ENCODE measurements at regions of chr13 and their contacts with region 1.

Region 1: GRCh38 chr13:62643007-62643483 is 1227.4 kb upstream of the PCDH20 start:
- DNase-seq: no peak
- ATAC-seq: no peak
- H3K4me3 ChIP-seq: no peak overlapping the region
- H3K4me3 Mint-ChIP-seq: no peak overlapping the region
- H3K27ac ChIP-seq: no peak overlapping the region
- H3K27ac Mint-ChIP-seq: no peak overlapping the region
- H3K4me1 ChIP-seq: no peaks in the 10 kb centered on the region
- H3K4me1 Mint-ChIP-seq: no peaks in the 10 kb centered on the region
- H3K27me3 ChIP-seq: no peaks in the 10 kb centered on the region
- H3K27me3 Mint-ChIP-seq: no peaks in the 10 kb centered on the region

Region 2: DNA sequence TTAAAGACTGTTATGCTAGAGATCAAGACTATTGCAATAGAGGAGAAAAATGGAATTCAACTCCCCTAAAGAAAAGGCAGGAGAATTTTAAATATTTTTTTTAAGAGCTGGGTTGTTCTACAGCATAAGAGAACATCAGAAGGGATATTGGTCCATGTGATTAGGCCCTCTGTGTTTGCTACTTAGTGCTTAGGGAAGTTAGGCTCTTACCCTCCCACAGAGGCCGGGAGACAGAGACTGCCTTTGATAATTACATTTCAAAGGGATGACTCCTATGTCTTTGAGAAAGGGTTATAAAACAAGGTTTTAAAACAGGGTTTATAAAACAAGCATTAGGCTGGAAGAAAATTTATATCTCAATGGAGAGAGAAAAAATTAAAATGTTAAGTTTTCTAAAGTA is 20.7 kb after region 1 on chr13:
- CTCF ChIA-PET with region 1: no interaction called
- POLR2A ChIA-PET with region 1: no interaction called
- DNase-seq: no peak
- ATAC-seq: no peak
- H3K4me3 ChIP-seq: no peak overlapping the region
- H3K4me3 Mint-ChIP-seq: no peak overlapping the region
- H3K27ac ChIP-seq: no peak overlapping the region
- H3K27ac Mint-ChIP-seq: no peak overlapping the region
- H3K4me1 ChIP-seq: no peaks in the 10 kb centered on the region
- H3K4me1 Mint-ChIP-seq: no peaks in the 10 kb centered on the region
- H3K27me3 ChIP-seq: no peaks in the 10 kb centered on the region
- H3K27me3 Mint-ChIP-seq: no peaks in the 10 kb centered on the region

Region 3: GRCh38 chr13:62696490-62696889 is 53.4 kb after region 1 on chr13:
- CTCF ChIA-PET with region 1: interaction called in 1 of 2 experiments, 11 read pairs
- POLR2A ChIA-PET with region 1: no interaction called
- DNase-seq: no peak
- ATAC-seq: no peak
- H3K4me3 ChIP-seq: no peak overlapping the region
- H3K4me3 Mint-ChIP-seq: no peak overlapping the region
- H3K27ac ChIP-seq: no peak overlapping the region
- H3K27ac Mint-ChIP-seq: no peak overlapping the region
- H3K4me1 ChIP-seq: no peaks in the 10 kb centered on the region
- H3K4me1 Mint-ChIP-seq: no peaks in the 10 kb centered on the region
- H3K27me3 ChIP-seq: no peaks in the 10 kb centered on the region
- H3K27me3 Mint-ChIP-seq: no peaks in the 10 kb centered on the region

Measured in T-cell (primary cell).